Psoas muscle (tissue), 8 donors: ENCODE measurements at regions of chr4 and their contacts with region 1.

Region 1: GRCh38 chr4:159175085-159175988 is 72.5 kb downstream of the RAPGEF2 start:
- DNase-seq: peak; percentile 29 to 62
- ATAC-seq: peak; percentile 84 to 93 (median 86)
- H3K4me3 ChIP-seq: no peak overlapping the region
- H3K27ac ChIP-seq: no peak overlapping the region
- H3K4me1 ChIP-seq: peaks cover 66% of the 10 kb centered on the region
- H3K27me3 ChIP-seq: no peaks in the 10 kb centered on the region
- CTCF ChIP-seq: peak; percentile 88

Region 2: DNA sequence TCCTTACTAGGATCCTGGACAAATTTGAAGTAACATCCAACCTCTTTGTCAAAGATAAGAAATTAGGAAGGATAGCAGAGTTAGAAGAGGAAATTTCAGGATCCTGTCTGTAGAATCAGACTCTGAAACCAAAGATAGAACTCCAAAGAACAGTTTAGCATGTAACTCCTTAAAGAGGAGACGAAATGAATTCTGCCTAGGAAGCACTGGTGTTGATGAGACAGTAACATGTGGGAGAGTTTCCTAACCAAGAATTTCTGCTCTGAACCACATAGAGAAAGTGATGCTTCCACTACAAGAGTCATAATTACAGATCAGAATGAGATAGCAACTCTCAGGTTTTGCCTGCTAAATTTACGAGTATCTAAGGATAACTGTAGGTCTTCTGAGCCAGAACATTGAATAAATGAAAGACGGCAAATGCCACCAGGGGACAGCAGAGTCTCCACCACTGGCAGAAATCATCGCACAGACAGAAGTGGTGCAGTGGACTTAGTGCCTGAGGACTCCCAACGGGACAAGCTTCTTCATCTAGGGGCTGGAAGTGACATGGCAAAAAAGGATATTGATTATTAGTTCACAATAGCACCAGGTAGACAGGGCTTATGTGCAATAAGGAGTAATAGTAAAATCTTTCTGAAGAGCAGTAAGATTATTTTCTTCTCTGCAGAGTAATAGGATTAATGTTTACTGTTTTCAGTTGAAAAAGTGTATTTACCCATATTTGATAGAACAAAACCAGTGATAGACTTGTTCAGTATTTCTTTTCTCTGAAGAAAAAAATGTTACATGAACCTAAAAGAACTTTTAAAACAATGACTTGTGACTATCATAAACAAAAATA is 445.4 kb before region 1 on chr4:
- intact Hi-C with region 1: loop called in 1 of 2 experiments (anchors 10 kb)
- DNase-seq: peak; percentile 43 to 66
- ATAC-seq: peak; percentile 87 to 99 (median 94)
- H3K4me3 ChIP-seq: no peak overlapping the region
- H3K27ac ChIP-seq: no peak overlapping the region
- H3K4me1 ChIP-seq: no peaks in the 10 kb centered on the region
- H3K27me3 ChIP-seq: no peaks in the 10 kb centered on the region
- CTCF ChIP-seq: peak; percentile 86

Region 3: GRCh38 chr4:158856852-158857251 is 318.5 kb before region 1 on chr4:
- intact Hi-C with region 1: loop called (anchors 5 to 10 kb)
- DNase-seq: no peak
- ATAC-seq: peak; percentile 36 to 58 (median 48)
- H3K4me3 ChIP-seq: no peak overlapping the region
- H3K27ac ChIP-seq: no peak overlapping the region
- H3K4me1 ChIP-seq: no peaks in the 10 kb centered on the region
- H3K27me3 ChIP-seq: no peaks in the 10 kb centered on the region
- CTCF ChIP-seq: peak; percentile 52

Region 4: DNA sequence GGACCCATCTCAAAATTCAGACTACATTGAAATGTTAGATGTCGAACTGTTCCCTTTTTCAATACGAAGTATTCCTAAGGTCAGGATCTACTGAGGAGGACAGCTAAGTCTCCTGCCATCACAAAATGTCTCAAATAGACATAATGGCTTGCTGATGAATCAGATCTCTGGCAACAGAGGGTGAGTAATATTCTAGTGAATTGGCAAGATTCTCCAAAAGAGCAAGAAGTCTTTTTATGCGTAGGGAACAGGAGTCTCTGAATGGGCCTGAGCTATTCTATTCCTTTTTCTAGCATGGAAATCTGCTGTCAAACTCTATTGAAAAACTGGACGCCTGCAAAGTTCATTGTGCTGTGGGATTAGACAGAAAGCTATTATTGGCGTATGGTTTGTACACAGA is 261.1 kb before region 1 on chr4:
- intact Hi-C with region 1: loop called in 1 of 2 experiments (anchors 5 kb)
- DNase-seq: no peak
- ATAC-seq: peak; percentile 45 to 88 (median 78)
- H3K4me3 ChIP-seq: no peak overlapping the region
- H3K27ac ChIP-seq: no peak overlapping the region
- H3K4me1 ChIP-seq: peaks cover 15% of the 10 kb centered on the region
- H3K27me3 ChIP-seq: no peaks in the 10 kb centered on the region
- CTCF ChIP-seq: no peak

Region 5: DNA sequence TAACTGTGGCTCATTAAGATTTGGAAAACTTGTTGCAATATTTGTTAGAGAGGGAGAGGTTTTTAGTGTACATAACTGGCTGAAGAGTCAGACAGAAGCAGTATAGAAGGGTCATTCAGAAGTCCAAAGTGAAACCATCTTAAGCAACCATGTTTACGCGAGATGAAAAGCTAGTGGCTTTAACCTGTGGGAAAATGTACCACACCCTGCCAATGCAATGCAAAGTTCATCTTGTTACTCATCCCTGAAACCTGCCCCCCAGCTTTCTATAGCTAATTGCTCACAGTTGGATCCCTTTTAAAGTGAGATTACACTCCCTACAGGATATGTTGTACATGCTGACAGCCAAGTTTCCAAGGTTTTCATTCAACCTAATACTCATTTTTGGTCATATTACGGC is 169.1 kb before region 1 on chr4:
- intact Hi-C with region 1: loop called in 1 of 2 experiments (anchors 10 kb)
- DNase-seq: no peak
- ATAC-seq: no peak
- H3K4me3 ChIP-seq: no peak overlapping the region
- H3K27ac ChIP-seq: no peak overlapping the region
- H3K4me1 ChIP-seq: peaks cover 10% of the 10 kb centered on the region
- H3K27me3 ChIP-seq: no peaks in the 10 kb centered on the region
- CTCF ChIP-seq: no peak

Region 6: DNA sequence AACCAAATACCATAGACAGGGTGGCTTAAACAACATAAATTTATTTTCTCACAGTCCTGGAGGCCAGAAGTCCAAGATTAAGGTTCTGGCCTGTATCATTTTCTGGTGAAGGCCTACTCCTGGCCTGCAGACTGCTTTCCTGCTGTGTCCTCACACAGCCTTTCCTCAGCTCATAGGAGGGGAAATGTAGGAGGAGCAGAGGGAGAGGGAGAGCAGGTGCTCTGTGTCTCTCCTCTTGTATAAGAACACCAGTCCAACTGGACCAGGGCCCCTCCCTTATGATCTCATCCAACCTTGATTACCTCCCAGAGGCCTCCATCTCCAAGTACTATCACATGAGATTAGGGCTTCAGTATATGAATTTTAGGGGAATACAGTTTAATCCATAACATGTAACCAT is 38.2 kb before region 1 on chr4:
- intact Hi-C with region 1: loop called in 1 of 2 experiments (anchors 1 kb)
- DNase-seq: no peak
- ATAC-seq: peak; percentile 84 to 88 (median 86)
- H3K4me3 ChIP-seq: no peak overlapping the region
- H3K27ac ChIP-seq: peak overlapping the region; percentile 47
- H3K4me1 ChIP-seq: peaks cover 62% of the 10 kb centered on the region
- H3K27me3 ChIP-seq: no peaks in the 10 kb centered on the region
- CTCF ChIP-seq: no peak